Activated CD4-positive, alpha-beta memory T cell treated with anti-CD3 and anti-CD28 coated beads for 36 hours (primary cell): ENCODE measurements at regions of chr20 and their contacts with region 1.

Region 1: GRCh38 chr20:1965520-1966351 is 28.1 kb downstream of the PDYN start:
- DNase-seq: peak; percentile 88
- H3K4me3 Mint-ChIP-seq: peak overlapping the region; percentile 24
- H3K27ac Mint-ChIP-seq: no peak overlapping the region
- H3K4me1 Mint-ChIP-seq: peaks cover 10% of the 10 kb centered on the region
- H3K27me3 Mint-ChIP-seq: peaks cover 20% of the 10 kb centered on the region

Region 2: DNA sequence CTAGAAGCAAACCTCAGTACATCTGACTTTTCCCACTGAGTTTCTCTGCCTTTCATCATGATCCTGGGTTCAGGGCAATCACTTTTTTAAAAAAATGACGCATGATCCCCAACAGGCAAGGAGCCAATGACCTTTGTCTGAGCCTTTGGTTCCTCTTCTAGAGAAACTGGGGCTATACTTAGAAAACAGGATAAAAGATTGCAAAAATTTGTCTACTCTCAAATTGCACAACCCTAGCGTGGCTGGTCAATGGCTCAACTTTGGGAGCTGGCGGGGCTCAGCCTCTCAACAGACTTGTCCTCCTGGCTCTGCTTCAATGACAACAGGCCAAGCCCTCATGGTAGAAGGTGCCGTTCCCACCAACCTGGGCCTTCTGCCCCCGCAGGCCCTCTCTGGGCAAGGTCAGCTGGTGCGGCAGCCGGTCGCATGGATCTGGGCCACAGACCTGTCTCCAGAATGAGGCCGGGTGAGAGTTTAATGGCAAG is 20.6 kb before region 1 on chr20:
- CTCF ChIA-PET with region 1: no interaction called
- POLR2A ChIA-PET with region 1: no interaction called
- intact Hi-C with region 1: no loop called
- DNase-seq: no peak
- H3K4me3 Mint-ChIP-seq: no peak overlapping the region
- H3K27ac Mint-ChIP-seq: no peak overlapping the region
- H3K4me1 Mint-ChIP-seq: no peaks in the 10 kb centered on the region
- H3K27me3 Mint-ChIP-seq: peaks cover 29% of the 10 kb centered on the region

Region 3: GRCh38 chr20:2005831-2006426 is 40.2 kb after region 1 on chr20:
- CTCF ChIA-PET with region 1: interaction called, 17 read pairs
- POLR2A ChIA-PET with region 1: no interaction called
- intact Hi-C with region 1: no loop called
- DNase-seq: peak; percentile 69
- H3K4me3 Mint-ChIP-seq: no peak overlapping the region
- H3K27ac Mint-ChIP-seq: no peak overlapping the region
- H3K4me1 Mint-ChIP-seq: no peaks in the 10 kb centered on the region
- H3K27me3 Mint-ChIP-seq: peaks cover 21% of the 10 kb centered on the region

Region 4: DNA sequence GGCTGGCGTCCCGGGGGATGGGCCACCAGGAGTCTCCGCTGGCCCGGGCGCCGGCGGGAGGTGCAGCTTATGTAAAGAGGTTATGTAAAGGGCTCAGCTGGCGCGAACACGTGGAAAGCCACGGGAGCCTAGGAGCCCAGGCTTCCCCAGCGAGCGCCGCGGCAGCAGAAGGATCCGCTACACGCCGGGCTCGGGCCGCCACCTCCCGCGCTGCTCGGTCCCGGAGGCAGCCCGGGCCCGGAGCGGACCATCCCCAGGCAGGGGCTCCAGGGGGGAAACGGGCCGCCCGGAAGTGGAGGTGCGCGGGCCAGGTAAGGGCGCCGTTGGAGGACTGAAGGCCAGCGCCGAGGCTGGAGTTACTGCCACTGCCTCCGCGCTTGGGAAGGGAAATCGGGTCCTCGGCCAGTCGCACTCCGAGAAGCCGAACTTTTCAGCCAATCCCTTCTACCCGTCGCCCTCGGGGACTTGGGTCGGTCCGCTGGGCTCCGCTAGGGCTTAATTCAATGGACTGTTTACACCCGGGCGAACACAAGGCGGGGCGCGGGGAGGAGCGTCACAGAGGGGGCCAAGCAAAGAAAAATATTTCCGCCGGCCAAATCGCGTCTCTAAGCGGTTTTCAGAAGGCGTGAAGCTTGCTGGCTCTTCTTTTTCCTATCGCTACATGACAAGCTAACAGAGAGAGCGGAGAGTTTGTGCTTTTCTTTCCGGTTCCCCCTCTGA is 136.3 kb after region 1 on chr20:
- CTCF ChIA-PET with region 1: interaction called, 9 read pairs
- POLR2A ChIA-PET with region 1: no interaction called
- intact Hi-C with region 1: loop called (anchors 5 kb)
- DNase-seq: peak; percentile 92
- H3K4me3 Mint-ChIP-seq: peak overlapping the region; percentile 77
- H3K27ac Mint-ChIP-seq: peak overlapping the region; percentile 99
- H3K4me1 Mint-ChIP-seq: peaks cover 42% of the 10 kb centered on the region
- H3K27me3 Mint-ChIP-seq: no peaks in the 10 kb centered on the region

Region 5: GRCh38 chr20:2206957-2207769 is 241.4 kb after region 1 on chr20:
- CTCF ChIA-PET with region 1: interaction called, 10 read pairs
- POLR2A ChIA-PET with region 1: no interaction called
- intact Hi-C with region 1: no loop called
- DNase-seq: peak; percentile 77
- H3K4me3 Mint-ChIP-seq: peak overlapping the region; percentile 74
- H3K27ac Mint-ChIP-seq: no peak overlapping the region
- H3K4me1 Mint-ChIP-seq: peaks cover 7% of the 10 kb centered on the region
- H3K27me3 Mint-ChIP-seq: peaks cover 7% of the 10 kb centered on the region